ENCODE measurements at regions of chr14 and their contacts with region 1.

Region 1: DNA sequence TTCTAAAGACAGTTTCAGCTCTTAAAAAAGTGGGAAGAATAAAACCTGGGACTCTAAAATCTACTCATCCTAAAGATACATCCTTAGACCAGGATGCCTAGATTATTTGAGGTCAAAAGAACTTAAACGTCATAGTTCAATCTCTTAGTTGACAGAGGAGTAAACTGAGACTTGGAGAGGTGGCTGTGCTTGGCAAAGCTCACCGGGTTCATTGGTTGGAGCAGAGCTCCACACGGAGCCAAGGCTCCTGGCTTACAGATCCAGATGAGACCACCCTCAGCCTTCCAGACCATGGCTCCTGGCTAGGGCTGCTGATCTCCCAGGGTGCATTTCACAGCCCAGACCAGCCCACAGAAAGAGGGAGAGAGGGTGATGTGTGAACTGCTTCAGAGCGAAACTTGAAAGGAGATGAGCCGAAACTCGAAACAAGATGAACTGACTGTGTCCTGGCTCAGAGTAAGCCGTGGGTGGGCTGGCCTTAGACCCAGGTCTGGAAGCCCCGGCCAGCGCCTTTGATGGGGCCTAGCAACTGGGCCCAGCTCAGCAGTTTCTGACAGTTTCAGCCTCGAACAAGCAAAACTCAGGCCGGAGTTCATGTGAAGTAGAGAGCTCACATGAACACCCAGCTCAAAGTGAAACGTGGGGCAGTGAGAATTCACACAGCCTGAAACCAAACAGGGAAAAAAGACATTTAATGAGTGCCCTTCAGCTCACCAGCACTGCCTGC is 1044.8 kb downstream of the BCL11B start:
- DNase-seq: peak in 5 of 14 experiments; percentile 13 to 56 (median 48)
- ATAC-seq: no peak
- H3K4me3 ChIP-seq: no peak overlapping the region
- H3K4me3 Mint-ChIP-seq: peak overlapping the region; percentile 61
- H3K27ac ChIP-seq: peak overlapping the region; percentile 65
- H3K27ac Mint-ChIP-seq: peak overlapping the region; percentile 96
- H3K4me1 ChIP-seq: peaks cover 84% of the 10 kb centered on the region
- H3K4me1 Mint-ChIP-seq: peaks cover 94% of the 10 kb centered on the region
- H3K27me3 ChIP-seq: no peaks in the 10 kb centered on the region
- H3K27me3 Mint-ChIP-seq: no peaks in the 10 kb centered on the region
- CTCF ChIP-seq: no peak

Region 2: GRCh38 chr14:97994020-97994531 is 233.1 kb before region 1 on chr14:
- CTCF ChIA-PET with region 1: no interaction called
- POLR2A ChIA-PET with region 1: no interaction called
- intact Hi-C with region 1: loop called in 1 of 2 experiments (anchors 5 kb)
- DNase-seq: peak in 9 of 14 experiments; percentile 14 to 87 (median 50)
- ATAC-seq: peak; percentile 81
- H3K4me3 ChIP-seq: no peak overlapping the region
- H3K4me3 Mint-ChIP-seq: peak overlapping the region; percentile 43
- H3K27ac ChIP-seq: peak overlapping the region; percentile 68 to 75
- H3K27ac Mint-ChIP-seq: peak overlapping the region; percentile 93
- H3K4me1 ChIP-seq: peaks cover 51% of the 10 kb centered on the region
- H3K4me1 Mint-ChIP-seq: peaks cover 88% of the 10 kb centered on the region
- H3K27me3 ChIP-seq: no peaks in the 10 kb centered on the region
- H3K27me3 Mint-ChIP-seq: no peaks in the 10 kb centered on the region
- CTCF ChIP-seq: no peak

Region 3: DNA sequence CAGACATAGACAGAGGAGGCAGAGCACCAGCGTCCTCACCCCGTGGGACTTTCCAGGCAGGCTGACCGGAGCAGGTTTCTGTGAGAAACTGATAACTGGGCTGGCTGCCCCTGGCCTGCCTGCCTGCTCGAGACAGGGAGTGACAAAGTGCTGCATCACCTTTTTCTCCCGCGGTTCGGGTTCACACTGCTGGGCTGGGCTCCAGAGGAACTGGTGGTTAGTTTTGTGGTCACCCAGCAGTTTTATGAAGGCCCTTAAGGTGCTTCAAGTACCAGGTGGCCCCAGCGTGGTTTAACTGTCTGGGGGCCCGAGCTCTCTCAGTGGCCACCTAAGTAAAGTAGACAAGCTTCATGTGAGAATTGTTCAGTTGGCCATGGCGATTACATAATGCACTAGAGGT is 28.8 kb before region 1 on chr14:
- CTCF ChIA-PET with region 1: no interaction called
- POLR2A ChIA-PET with region 1: interaction called, 25 read pairs
- intact Hi-C with region 1: loop called in 1 of 2 experiments (anchors 5 kb)
- DNase-seq: peak in 7 of 14 experiments; percentile 35 to 79 (median 61)
- ATAC-seq: peak; percentile 32
- H3K4me3 ChIP-seq: peak overlapping the region; percentile 22
- H3K4me3 Mint-ChIP-seq: peak overlapping the region; percentile 36
- H3K27ac ChIP-seq: peak overlapping the region; percentile 13 to 54
- H3K27ac Mint-ChIP-seq: peak overlapping the region; percentile 93
- H3K4me1 ChIP-seq: peaks cover 72% of the 10 kb centered on the region
- H3K4me1 Mint-ChIP-seq: peaks cover 96% of the 10 kb centered on the region
- H3K27me3 ChIP-seq: no peaks in the 10 kb centered on the region
- H3K27me3 Mint-ChIP-seq: no peaks in the 10 kb centered on the region
- CTCF ChIP-seq: no peak

Region 4: DNA sequence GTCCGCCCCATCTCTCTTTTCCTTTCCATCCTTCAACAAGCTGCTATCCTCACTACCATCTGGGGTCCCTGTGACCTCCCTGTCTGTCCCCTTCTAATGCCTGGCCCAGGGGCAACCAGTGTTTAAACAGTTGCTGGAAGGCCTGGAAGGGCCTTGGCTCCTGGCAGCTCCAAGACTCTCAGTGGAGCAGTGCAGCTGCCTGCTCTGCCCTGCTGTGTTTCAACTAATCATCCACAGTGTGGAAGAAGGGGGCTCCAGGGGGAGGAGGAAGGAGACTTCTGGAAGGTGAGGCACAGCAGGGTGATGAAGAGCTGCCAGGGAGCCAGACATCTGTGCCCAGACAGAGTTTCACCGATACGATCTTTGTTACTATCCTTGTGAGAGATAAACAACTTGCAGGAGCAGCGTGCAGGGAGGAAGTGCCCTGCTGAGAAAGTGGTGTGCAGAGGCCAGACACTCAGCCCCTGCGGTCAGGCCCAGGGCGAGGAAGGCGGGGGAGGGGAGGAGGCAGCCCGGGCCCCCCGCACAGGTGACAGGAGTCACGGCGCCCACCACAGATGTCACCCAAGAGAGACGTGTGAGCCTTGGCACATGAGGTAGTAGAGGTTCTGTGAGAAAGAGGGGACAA is 17.0 kb before region 1 on chr14:
- CTCF ChIA-PET with region 1: interaction called, 3 read pairs
- POLR2A ChIA-PET with region 1: interaction called, 25 read pairs
- intact Hi-C with region 1: loop called in 1 of 2 experiments (anchors 2 kb)
- DNase-seq: peak in 12 of 14 experiments; percentile 30 to 81 (median 66)
- ATAC-seq: peak; percentile 68
- H3K4me3 ChIP-seq: peak overlapping the region; percentile 7
- H3K4me3 Mint-ChIP-seq: peak overlapping the region; percentile 69
- H3K27ac ChIP-seq: peak overlapping the region; percentile 67 to 70
- H3K27ac Mint-ChIP-seq: peak overlapping the region; percentile 93
- H3K4me1 ChIP-seq: peaks cover 55% of the 10 kb centered on the region
- H3K4me1 Mint-ChIP-seq: peaks cover 80% of the 10 kb centered on the region
- H3K27me3 ChIP-seq: no peaks in the 10 kb centered on the region
- H3K27me3 Mint-ChIP-seq: no peaks in the 10 kb centered on the region
- CTCF ChIP-seq: no peak

Region 5: GRCh38 chr14:99192028-99192621 is 965.0 kb after region 1 on chr14:
- CTCF ChIA-PET with region 1: no interaction called
- POLR2A ChIA-PET with region 1: interaction called, 12 read pairs
- intact Hi-C with region 1: no loop called
- DNase-seq: peak in 5 of 14 experiments; percentile 40 to 72 (median 64)
- ATAC-seq: peak; percentile 40
- H3K4me3 ChIP-seq: peak overlapping the region; percentile 59
- H3K4me3 Mint-ChIP-seq: peak overlapping the region; percentile 89
- H3K27ac ChIP-seq: peak overlapping the region; percentile 77 to 81
- H3K27ac Mint-ChIP-seq: peak overlapping the region; percentile 95
- H3K4me1 ChIP-seq: peaks cover 99% of the 10 kb centered on the region
- H3K4me1 Mint-ChIP-seq: peaks cover 97% of the 10 kb centered on the region
- H3K27me3 ChIP-seq: no peaks in the 10 kb centered on the region
- H3K27me3 Mint-ChIP-seq: no peaks in the 10 kb centered on the region
- CTCF ChIP-seq: no peak

Measured in CD4-positive, alpha-beta T cell (primary cell).